WTC11 (cell line): ENCODE measurements at regions of chr18 and their contacts with region 1.

Region 1: GRCh38 chr18:29874519-29875098 is 1167.9 kb downstream of the DSC3 start:
- DNase-seq: peak; percentile 14
- ATAC-seq: peak; percentile 60
- H3K4me3 Mint-ChIP-seq: no peak overlapping the region
- H3K27ac Mint-ChIP-seq: no peak overlapping the region
- H3K4me1 Mint-ChIP-seq: peaks cover 8% of the 10 kb centered on the region
- H3K27me3 Mint-ChIP-seq: peaks cover 10% of the 10 kb centered on the region
- CTCF ChIP-seq: peak; percentile 66

Region 2: DNA sequence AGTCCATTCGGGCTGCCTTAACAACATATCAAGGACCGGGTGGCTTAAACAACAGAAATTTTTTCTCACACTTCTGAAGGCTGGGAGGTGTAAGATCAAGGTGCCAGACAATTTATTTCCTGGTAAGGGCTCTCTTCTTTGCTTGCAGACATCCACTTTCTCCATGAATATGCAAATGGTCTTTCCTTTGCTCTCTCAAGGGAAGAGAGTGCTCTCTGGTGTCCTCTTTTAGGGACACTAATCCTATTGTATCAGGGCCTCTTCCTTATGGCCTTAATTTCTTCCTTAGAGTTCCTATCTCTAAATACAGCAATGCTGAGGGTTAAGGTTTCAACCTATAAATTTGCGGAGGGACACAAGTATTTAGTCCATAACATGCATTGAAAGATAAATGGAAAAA is 397.1 kb after region 1 on chr18:
- CTCF ChIA-PET with region 1: interaction called, 13 read pairs
- POLR2A ChIA-PET with region 1: no interaction called
- DNase-seq: no peak
- ATAC-seq: peak; percentile 95
- H3K4me3 Mint-ChIP-seq: no peak overlapping the region
- H3K27ac Mint-ChIP-seq: no peak overlapping the region
- H3K4me1 Mint-ChIP-seq: peaks cover 8% of the 10 kb centered on the region; the same call in 1 of the 2 replicates
- H3K27me3 Mint-ChIP-seq: no peaks in the 10 kb centered on the region
- CTCF ChIP-seq: no peak